ENCODE measurements at regions of chr16 and their contacts with region 1.

Region 1: GRCh38 chr16:68445458-68445857 is 2.9 kb downstream of the SMPD3 start:
- DNase-seq: peak; percentile 69 to 88 (median 82)
- H3K4me3 ChIP-seq: no peak overlapping the region
- H3K27ac ChIP-seq: no peak overlapping the region
- H3K4me1 ChIP-seq: peaks cover 0 to 19% (median 11%) of the 10 kb centered on the region in 4 experiments
- H3K27me3 ChIP-seq: peaks cover 6 to 34% (median 17%) of the 10 kb centered on the region in 5 experiments

Region 2: GRCh38 chr16:68434624-68435197 is 10.7 kb before region 1 on chr16:
- CTCF ChIA-PET with region 1: interaction called, 30 read pairs
- POLR2A ChIA-PET with region 1: no interaction called
- DNase-seq: no peak
- H3K4me3 ChIP-seq: no peak overlapping the region
- H3K27ac ChIP-seq: no peak overlapping the region
- H3K4me1 ChIP-seq: peaks cover 0 to 11% (median 1%) of the 10 kb centered on the region in 4 experiments
- H3K27me3 ChIP-seq: peaks cover 0 to 7% (median 2%) of the 10 kb centered on the region in 5 experiments

Region 3: DNA sequence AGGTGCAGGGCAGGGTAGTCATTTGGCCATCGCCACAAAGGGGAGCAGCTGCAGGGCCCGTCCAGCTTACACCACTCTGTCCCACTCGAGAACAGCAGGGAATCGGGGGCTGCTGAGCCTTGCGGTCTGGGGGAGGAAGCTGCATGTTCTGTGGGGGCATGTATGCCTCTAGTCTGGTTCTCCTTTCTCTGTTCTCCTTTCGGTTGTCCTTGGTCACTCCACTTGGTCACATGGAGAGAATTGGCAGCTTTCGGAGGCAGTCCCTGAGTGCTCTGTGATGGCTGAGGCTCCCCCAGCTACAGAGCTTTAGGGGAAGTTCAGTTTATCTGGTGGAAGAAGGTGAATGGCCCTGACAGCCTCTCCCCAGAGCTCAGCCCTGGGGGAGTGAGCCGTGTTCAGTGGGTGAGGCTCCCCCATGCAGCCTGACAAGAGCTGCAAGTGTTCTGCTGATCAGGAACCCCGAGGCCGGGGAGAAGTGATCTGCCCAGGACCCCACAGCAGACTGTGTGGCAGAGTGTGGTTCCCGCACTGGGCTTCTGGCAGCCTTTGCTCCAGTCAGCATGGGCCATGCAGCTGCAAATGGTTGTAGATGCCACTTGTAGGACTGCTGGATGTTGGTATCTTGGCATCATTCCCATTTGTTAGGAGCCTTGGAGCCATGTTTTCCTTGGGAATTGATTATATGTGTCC is 25.1 kb after region 1 on chr16:
- CTCF ChIA-PET with region 1: interaction called, 41 read pairs
- POLR2A ChIA-PET with region 1: no interaction called
- DNase-seq: peak; percentile 75 to 98 (median 96)
- H3K4me3 ChIP-seq: peak overlapping the region in 6 of 7 experiments; percentile 44 to 74 (median 54)
- H3K27ac ChIP-seq: peak overlapping the region in 1 of 2 experiments; percentile 51
- H3K4me1 ChIP-seq: peaks cover 17 to 77% (median 43%) of the 10 kb centered on the region in 4 experiments
- H3K27me3 ChIP-seq: no peaks in the 10 kb centered on the region

Region 4: GRCh38 chr16:69660166-69660565 is 1214.7 kb after region 1 on chr16:
- CTCF ChIA-PET with region 1: no interaction called
- POLR2A ChIA-PET with region 1: no interaction called
- DNase-seq: no peak
- H3K4me3 ChIP-seq: no peak overlapping the region
- H3K27ac ChIP-seq: no peak overlapping the region
- H3K4me1 ChIP-seq: no peaks in the 10 kb centered on the region
- H3K27me3 ChIP-seq: no peaks in the 10 kb centered on the region

Measured in common myeloid progenitor, CD34-positive (primary cell).